T-cell (primary cell): ENCODE measurements at regions of chr2 and their contacts with region 1.

Region 1: DNA sequence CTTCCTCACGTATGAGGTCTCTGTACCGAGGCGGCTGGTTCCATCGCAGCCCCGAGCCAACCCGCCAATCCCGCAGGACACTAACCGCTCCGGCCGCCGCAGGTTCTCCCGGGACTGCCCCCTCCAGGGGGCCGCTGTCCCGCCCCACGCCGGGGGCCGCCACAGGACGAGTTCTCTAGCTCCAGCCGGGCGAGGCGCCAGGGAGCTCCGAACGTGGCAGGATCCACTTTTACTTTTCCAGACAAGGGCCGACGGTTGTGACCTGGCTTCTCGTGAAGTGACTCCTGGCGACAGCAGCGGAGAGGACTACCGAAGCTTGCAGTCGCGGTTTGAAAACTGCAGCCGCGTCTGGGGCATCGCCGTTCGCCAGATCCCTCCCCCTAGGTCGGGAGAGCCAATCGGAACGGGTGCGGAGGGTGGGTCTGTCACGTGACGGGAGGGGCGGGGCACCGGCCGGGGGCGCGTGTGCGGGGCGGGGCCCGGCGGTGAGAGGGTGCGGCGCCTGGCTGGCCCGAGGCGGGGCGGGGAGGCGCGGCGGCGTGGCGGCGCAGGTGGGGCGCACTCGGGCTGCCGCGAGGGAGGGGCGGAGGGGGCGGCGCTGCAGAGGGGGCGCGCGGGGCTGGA is at the start of gene STK17B:
- DNase-seq: peak; percentile 90 to 98 (median 97)
- ATAC-seq: peak; percentile 67 to 75 (median 70)
- H3K4me3 ChIP-seq: peak within 1 kb of the TSS; percentile 86 to 99
- H3K4me3 Mint-ChIP-seq: peak within 1 kb of the TSS; percentile 88 to 99 (median 98)
- H3K27ac ChIP-seq: peak within 1 kb of the TSS; percentile 93
- H3K27ac Mint-ChIP-seq: peak within 1 kb of the TSS; percentile 92 to 96
- H3K4me1 ChIP-seq: peaks cover 36 to 37% of the 10 kb centered on the region in 2 experiments
- H3K4me1 Mint-ChIP-seq: peaks cover 39 to 46% (median 41%) of the 10 kb centered on the region in 3 donors
- H3K27me3 ChIP-seq: no peaks in the 10 kb centered on the region
- H3K27me3 Mint-ChIP-seq: no peaks in the 10 kb centered on the region
- total RNA-seq, gene STK17B: 218 to 478 (median 248) TPM

Region 2: DNA sequence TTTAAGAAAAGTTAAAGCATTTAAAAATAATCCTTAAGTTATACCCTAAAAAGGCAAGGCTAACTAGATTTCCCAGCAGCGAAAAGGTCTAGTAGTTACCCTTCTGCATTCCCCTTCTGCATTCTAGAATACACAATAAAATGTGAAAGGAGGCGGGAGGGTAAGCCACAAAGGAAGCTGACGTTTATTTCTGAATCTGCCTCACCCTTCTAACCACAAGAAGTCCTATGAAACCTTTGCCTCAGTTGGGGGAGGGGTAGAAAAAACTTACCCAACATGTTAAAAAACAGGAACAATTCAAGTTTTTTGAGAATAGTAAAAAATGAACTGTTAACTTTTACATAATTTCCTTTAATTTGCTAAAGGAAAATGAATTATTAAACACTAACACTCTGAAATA is 11.3 kb before region 1 on chr2:
- CTCF ChIA-PET with region 1: interaction called in 1 of 2 experiments, 6 read pairs
- POLR2A ChIA-PET with region 1: interaction called, 9 to 29 read pairs
- DNase-seq: peak in 29 of 35 experiments; percentile 36 to 91 (median 65)
- ATAC-seq: peak; percentile 50 to 72 (median 68)
- H3K4me3 ChIP-seq: peak overlapping the region in 1 of 2 donors; percentile 22
- H3K4me3 Mint-ChIP-seq: peak overlapping the region; percentile 54 to 99 (median 67)
- H3K27ac ChIP-seq: peak overlapping the region; percentile 93
- H3K27ac Mint-ChIP-seq: peak overlapping the region; percentile 82
- H3K4me1 ChIP-seq: peaks cover 36 to 67% of the 10 kb centered on the region in 2 experiments
- H3K4me1 Mint-ChIP-seq: peaks cover 72 to 85% (median 82%) of the 10 kb centered on the region in 3 donors
- H3K27me3 ChIP-seq: no peaks in the 10 kb centered on the region
- H3K27me3 Mint-ChIP-seq: no peaks in the 10 kb centered on the region

Region 3: GRCh38 chr2:196195302-196195701 is 23.9 kb after region 1 on chr2:
- CTCF ChIA-PET with region 1: interaction called in 1 of 2 experiments, 3 read pairs
- POLR2A ChIA-PET with region 1: interaction called, 3 to 10 read pairs
- DNase-seq: peak in 1 of 35 experiments; percentile 29
- ATAC-seq: peak in 1 of 4 experiments; percentile 30
- H3K4me3 ChIP-seq: no peak overlapping the region
- H3K4me3 Mint-ChIP-seq: peak overlapping the region; percentile 24 to 60 (median 49)
- H3K27ac ChIP-seq: no peak overlapping the region
- H3K27ac Mint-ChIP-seq: peak overlapping the region; percentile 76 to 79
- H3K4me1 ChIP-seq: peaks cover 8 to 18% of the 10 kb centered on the region in 2 experiments
- H3K4me1 Mint-ChIP-seq: peaks cover 52 to 72% (median 64%) of the 10 kb centered on the region in 3 donors
- H3K27me3 ChIP-seq: no peaks in the 10 kb centered on the region
- H3K27me3 Mint-ChIP-seq: no peaks in the 10 kb centered on the region

Region 4: DNA sequence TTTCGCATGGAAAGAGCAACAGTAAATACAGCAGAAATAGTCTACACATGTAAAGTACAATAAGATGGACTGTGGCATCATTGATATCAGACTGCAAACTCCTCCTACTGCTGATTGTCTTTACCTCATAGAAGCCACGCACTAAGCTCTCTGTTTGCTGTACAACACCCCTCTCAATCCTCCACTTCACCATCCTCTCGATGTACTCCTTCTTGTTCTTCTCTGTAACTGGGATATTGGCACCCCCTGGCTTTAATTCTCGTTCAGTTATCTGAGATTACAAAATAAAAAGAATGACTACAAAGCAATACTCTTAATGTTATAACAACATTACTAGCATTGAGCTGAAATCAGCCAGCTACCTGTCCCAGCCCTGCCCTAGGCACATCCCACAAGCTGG is 49.3 kb after region 1 on chr2:
- CTCF ChIA-PET with region 1: interaction called, 3 to 15 read pairs
- POLR2A ChIA-PET with region 1: interaction called, 9 to 10 read pairs
- DNase-seq: peak in 16 of 35 experiments; percentile 2 to 69 (median 26)
- ATAC-seq: peak; percentile 74 to 98 (median 86)
- H3K4me3 ChIP-seq: no peak overlapping the region
- H3K4me3 Mint-ChIP-seq: peak overlapping the region in 1 of 3 donors; percentile 30
- H3K27ac ChIP-seq: no peak overlapping the region
- H3K27ac Mint-ChIP-seq: peak overlapping the region; percentile 65 to 86
- H3K4me1 ChIP-seq: peaks cover 8 to 13% of the 10 kb centered on the region in 2 experiments
- H3K4me1 Mint-ChIP-seq: peaks cover 77 to 82% (median 77%) of the 10 kb centered on the region in 3 donors
- H3K27me3 ChIP-seq: no peaks in the 10 kb centered on the region
- H3K27me3 Mint-ChIP-seq: no peaks in the 10 kb centered on the region